Aorta (tissue), 5 donors: ENCODE measurements at regions of chr3 and their contacts with region 1.

Region 1: DNA sequence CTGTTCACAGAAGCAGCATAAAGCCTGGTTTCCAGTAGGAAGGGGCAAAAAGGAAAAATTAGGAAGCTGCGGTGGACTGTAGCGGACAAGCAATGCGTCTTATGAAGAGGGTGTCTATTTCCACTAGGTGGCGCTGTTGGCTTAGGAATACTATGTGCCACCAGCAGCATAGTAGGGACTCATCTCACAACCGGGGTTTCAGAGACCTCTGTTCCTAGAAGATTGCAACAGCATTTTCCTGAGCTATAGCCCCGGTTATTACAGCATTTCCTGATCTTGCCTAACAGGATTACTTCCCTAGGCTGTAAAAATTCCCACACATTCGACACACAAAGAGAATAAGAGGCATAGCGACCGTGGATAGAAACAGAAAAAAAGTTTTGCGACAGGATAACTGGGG is 683.0 kb downstream of the TBL1XR1 start:
- DNase-seq: no peak
- ATAC-seq: no peak
- H3K4me3 ChIP-seq: no peak overlapping the region
- H3K27ac ChIP-seq: no peak overlapping the region
- H3K4me1 ChIP-seq: no peaks in the 10 kb centered on the region
- H3K27me3 ChIP-seq: no peaks in the 10 kb centered on the region

Region 2: DNA sequence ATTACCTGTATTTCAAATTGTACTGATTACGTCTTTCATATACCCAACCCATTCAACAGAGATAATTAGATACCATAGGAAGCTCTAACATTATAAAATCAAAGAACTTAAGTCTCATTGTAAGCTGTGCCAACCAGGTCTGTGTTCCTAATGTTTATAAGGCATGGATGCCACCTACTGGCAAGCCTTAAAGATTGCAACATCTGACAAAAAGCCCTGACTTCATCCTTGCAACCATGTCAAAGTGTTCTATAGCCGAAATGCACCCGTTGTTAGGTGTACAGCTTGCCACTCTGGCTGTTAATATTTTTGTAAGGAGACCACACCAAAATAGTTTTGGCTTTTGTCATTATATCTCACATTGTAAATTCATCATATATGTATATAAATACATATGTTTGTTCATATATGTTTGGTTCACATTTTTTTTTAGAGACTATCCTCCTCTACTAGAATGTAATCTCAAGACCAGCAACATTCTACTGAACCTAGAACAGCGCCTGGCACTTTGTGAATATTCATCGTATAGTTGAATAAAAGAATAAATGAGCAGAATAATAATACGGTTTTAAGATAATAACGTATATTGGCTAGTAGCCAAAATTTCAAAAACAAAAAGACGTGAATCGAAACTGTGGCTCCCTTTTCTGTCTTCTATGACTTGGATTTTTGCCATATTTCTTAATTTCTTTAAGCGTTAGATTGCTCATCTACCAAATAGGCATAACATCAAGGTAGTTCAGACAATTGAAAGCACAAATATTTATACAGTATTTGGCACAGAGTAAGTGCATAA is 424.9 kb after region 1 on chr3:
- intact Hi-C with region 1: loop called in 1 of 2 experiments (anchors 5 kb)
- DNase-seq: no peak
- ATAC-seq: peak; percentile 77
- H3K4me3 ChIP-seq: no peak overlapping the region
- H3K27ac ChIP-seq: no peak overlapping the region
- H3K4me1 ChIP-seq: no peaks in the 10 kb centered on the region
- H3K27me3 ChIP-seq: no peaks in the 10 kb centered on the region